ENCODE measurements at regions of chr13 and their contacts with region 1.

Region 1: DNA sequence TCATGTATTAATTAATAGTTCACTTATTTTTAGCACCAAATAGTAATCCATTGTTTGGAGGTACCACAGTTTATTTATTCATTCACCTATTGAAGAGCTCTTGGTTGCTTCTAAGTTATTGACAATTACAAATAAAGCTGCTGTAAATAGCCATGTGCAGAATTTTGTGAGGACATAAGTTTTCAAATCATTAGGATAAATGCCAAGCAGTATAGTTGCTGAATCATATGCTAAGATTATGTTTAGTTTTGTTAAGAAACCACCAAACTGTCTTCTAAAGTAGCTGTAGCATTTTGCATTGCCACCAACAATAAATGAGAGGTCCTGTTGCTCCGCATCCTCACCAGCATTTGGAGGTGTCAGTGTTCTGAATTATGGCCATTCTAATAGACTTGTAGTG is 2126.8 kb downstream of the PCDH9 start:
- DNase-seq: no peak
- H3K4me3 ChIP-seq: no peak overlapping the region
- H3K27ac ChIP-seq: no peak overlapping the region
- H3K4me1 ChIP-seq: no peaks in the 10 kb centered on the region
- H3K27me3 ChIP-seq: no peaks in the 10 kb centered on the region
- CTCF ChIP-seq: no peak
- EP300 ChIP-seq: no peak
- POLR2A ChIP-seq: no peak

Region 2: GRCh38 chr13:64791373-64791772 is 312.0 kb before region 1 on chr13:
- in situ Hi-C with region 1: no loop called
- intact Hi-C with region 1: loop called (anchors 5 kb)
- DNase-seq: no peak
- H3K4me3 ChIP-seq: no peak overlapping the region
- H3K27ac ChIP-seq: no peak overlapping the region
- H3K4me1 ChIP-seq: no peaks in the 10 kb centered on the region
- H3K27me3 ChIP-seq: no peaks in the 10 kb centered on the region
- CTCF ChIP-seq: no peak
- EP300 ChIP-seq: no peak
- POLR2A ChIP-seq: no peak

Region 3: GRCh38 chr13:65292488-65292901 is 189.1 kb after region 1 on chr13:
- in situ Hi-C with region 1: no loop called
- intact Hi-C with region 1: no loop called
- DNase-seq: no peak
- H3K4me3 ChIP-seq: no peak overlapping the region
- H3K27ac ChIP-seq: no peak overlapping the region
- H3K4me1 ChIP-seq: no peaks in the 10 kb centered on the region
- H3K27me3 ChIP-seq: no peaks in the 10 kb centered on the region
- CTCF ChIP-seq: no peak
- EP300 ChIP-seq: no peak
- POLR2A ChIP-seq: no peak

Region 4: GRCh38 chr13:65553096-65553727 is 449.9 kb after region 1 on chr13:
- in situ Hi-C with region 1: no loop called
- intact Hi-C with region 1: no loop called
- DNase-seq: no peak
- H3K4me3 ChIP-seq: no peak overlapping the region
- H3K27ac ChIP-seq: no peak overlapping the region
- H3K4me1 ChIP-seq: no peaks in the 10 kb centered on the region
- H3K27me3 ChIP-seq: no peaks in the 10 kb centered on the region
- CTCF ChIP-seq: no peak
- EP300 ChIP-seq: no peak
- POLR2A ChIP-seq: no peak